HEK293T (cell line): ENCODE measurements at regions of chr14 and their contacts with region 1.

Region 1: DNA sequence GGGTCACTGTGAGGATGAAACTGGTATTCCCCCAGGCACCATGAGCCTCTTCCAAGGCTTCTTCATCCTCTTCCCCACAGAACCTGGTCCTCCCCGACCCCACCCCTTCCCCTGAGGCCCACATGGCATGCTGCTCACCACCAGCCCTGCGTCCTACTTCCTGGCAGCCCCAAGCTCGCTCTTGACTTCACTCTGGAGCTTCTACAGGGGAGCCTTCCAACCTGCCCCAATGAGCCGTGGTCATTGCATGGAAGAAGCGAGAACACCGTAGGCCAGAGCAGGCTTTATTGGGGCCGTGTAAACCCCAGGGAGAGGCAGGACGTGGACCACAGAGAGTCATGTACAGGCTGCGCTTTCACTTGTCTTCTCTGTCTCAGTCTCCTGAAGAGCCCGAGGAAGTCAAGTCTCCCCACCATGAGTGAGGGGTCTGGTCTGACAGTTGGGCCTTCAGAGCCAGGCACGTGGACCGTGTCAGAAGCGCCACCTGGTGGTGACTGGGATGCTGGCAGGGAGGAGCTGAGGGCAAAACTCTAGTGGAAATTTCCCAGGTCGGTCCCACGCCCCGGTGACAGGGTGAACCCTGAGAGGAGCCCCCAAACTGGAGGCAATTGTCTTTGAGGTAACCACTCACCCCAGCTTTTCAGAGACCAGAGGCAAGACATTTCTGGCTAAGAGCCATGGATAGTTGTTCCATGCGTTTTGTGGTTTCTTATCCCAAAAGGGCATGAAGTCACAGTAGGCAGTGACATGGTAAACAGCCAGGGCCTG is 17.5 kb downstream of the RPS6KL1 start:
- DNase-seq: peak; percentile 75

Region 2: DNA sequence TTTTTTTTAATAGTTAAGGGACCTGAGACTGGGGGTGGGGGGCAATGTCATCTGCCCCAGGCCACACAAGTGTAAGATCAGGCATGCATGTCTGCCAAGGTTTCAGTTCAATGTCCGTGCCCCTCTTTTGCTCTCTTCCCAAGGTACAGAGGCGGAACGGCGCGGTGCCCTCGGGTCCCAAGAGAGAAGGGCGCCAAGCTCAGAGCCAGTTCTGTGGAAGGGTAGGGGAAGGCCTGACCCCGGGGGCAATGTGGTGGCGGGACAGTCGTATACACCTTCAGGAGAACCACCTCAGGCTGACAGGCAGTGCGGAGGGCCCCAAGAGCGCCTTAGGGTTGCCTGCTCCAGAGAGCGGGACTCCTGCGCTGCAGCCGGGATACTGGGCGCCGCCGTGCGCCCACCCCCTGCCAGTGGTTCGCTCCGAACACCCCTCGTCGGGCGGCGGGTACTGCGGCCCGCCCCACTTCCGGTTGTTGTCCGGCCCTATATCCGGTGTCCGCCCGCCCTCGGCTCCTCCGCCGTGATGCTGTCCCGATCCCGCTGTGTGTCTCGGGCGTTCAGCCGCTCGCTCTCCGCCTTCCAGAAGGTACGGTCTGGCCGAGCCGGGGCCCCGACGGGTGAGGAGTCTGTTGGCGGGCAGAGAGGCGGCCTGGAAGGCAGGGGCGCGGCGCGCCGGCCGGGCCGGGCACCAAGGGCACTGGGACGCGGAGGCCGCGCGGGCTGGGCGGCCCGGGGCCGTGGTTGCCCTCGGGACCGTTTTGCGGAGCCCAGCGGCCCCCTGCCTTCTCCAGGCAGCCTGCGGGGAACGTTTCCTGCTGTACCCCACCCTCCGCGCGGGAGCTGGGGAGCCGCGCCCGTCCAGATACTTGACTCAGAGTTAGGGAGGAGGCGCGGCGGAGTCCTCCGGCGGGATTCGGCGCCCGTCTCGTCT is 23.9 kb before region 1 on chr14 and contains the start of gene DLST:
- CTCF ChIA-PET with region 1: interaction called, 26 read pairs
- POLR2A ChIA-PET with region 1: interaction called, 12 read pairs
- DNase-seq: peak; percentile 94